ENCODE measurements at regions of chr3 and their contacts with region 1.

Region 1: GRCh38 chr3:77026904-77027634 is 12.8 kb upstream of the ROBO2 start:
- DNase-seq: no peak
- H3K4me3 ChIP-seq: no peak overlapping the region
- H3K27ac ChIP-seq: no peak overlapping the region
- H3K4me1 ChIP-seq: peaks cover 22% of the 10 kb centered on the region
- H3K27me3 ChIP-seq: no peaks in the 10 kb centered on the region
- CTCF ChIP-seq: no peak

Region 2: DNA sequence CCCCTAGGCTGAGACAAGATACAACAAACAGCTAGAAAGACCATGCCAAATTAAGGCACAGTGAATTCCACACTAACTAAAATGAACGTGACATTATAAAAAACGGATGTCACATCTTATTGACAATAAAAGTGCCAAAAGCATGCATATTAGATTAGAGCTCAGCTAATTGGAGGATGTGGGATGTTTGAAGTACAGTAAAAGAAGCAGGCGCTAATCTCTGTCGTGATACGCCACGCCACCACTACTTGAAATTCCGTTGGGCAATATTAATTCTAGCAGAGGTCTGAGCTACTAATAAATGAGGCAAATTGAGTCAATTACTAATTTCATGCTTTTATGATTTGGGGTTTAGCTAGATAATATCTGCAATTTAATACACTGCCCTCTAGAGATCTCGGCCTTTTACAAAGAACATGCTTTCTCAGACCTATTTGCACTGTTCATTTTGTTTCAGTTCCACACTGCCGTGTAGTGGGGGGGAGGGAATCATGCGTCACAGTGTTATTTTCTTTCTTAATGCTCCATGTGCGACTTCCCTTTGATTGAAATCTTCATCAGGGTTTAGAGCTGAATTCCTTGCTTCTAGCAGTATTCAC is 40.1 kb before region 1 on chr3:
- CTCF ChIA-PET with region 1: no interaction called
- POLR2A ChIA-PET with region 1: no interaction called
- intact Hi-C with region 1: loop called (anchors 1 kb)
- DNase-seq: peak; percentile 70
- H3K4me3 ChIP-seq: peak overlapping the region; percentile 32
- H3K27ac ChIP-seq: peak overlapping the region; percentile 31
- H3K4me1 ChIP-seq: peaks cover 12% of the 10 kb centered on the region
- H3K27me3 ChIP-seq: no peaks in the 10 kb centered on the region
- CTCF ChIP-seq: no peak

Region 3: DNA sequence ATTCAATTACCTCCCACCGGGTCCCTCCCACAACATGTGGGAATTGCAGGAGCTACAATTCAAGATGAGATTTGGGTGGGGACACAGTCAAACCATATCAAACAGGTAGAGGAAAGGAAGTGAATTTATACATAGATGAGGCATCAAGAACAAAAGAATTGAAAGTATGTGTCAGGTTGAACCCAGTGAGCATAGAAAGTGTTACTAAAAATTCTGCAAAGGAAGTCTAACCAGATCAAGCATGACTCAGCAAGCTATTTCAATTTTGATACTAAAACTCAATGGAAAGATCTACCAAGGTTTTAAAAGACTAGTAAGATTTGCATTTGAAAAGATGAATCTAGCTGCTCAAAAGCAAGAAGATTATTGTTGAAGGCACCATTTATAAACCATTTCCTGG is 335.9 kb after region 1 on chr3:
- CTCF ChIA-PET with region 1: no interaction called
- POLR2A ChIA-PET with region 1: no interaction called
- intact Hi-C with region 1: no loop called
- DNase-seq: no peak
- H3K4me3 ChIP-seq: no peak overlapping the region
- H3K27ac ChIP-seq: no peak overlapping the region
- H3K4me1 ChIP-seq: peaks cover 11% of the 10 kb centered on the region
- H3K27me3 ChIP-seq: no peaks in the 10 kb centered on the region
- CTCF ChIP-seq: no peak

Measured in A673 (cell line).